Activated naive CD4-positive, alpha-beta T cell treated with anti-CD3 and anti-CD28 coated beads for 36 hours (primary cell): ENCODE measurements at regions of chr3 and their contacts with region 1.

Region 1: DNA sequence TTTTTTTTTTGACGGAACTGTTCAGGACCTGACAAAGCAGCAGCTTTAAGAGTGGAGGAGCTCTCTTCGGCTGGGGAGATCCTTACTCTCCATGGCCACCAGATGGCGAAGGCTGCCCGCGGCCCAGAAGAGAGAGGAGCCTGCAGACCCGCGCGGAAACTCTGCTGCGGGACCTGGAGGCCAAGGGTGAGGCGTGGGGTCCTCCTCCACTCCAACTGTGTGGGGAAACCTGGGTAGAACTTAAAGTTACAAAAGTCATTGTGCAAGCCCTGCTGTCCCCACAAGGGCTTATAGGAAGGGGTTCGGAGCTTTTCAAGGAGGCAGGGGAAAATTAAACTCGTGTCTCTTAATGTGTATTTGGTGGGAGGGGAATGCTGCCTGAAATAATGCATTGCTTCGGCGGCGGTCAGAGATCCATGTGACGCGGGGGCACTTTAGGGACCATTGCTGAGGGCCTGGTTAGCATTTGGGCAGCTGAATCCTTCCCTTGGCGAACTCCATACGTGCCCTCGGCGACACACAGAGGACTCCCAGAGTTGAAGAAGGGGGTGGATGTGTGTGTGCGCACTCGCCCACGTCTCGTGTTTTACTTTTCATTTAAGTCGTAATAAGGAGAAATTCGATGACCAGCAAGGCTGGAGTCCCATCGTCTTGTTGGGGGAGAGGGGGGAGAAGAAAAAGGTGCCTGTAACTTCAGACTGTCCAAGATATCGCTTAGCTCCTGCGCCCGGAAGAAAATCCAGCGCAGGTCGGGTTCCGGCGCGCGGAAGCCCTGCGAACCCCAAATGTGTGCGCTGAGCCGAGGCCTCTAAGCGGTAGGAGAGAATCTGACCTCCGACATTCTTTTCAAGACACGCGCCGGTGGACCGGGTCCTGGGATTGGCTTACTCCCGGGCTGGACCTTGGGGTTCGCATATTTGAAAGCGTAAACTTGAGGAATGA is 9.7 kb downstream of the EOMES start:
- DNase-seq: peak; percentile 81
- H3K4me3 Mint-ChIP-seq: peak overlapping the region; percentile 93
- H3K27ac Mint-ChIP-seq: no peak overlapping the region
- H3K4me1 Mint-ChIP-seq: peaks cover 19% of the 10 kb centered on the region
- H3K27me3 Mint-ChIP-seq: peaks cover 49% of the 10 kb centered on the region

Region 2: DNA sequence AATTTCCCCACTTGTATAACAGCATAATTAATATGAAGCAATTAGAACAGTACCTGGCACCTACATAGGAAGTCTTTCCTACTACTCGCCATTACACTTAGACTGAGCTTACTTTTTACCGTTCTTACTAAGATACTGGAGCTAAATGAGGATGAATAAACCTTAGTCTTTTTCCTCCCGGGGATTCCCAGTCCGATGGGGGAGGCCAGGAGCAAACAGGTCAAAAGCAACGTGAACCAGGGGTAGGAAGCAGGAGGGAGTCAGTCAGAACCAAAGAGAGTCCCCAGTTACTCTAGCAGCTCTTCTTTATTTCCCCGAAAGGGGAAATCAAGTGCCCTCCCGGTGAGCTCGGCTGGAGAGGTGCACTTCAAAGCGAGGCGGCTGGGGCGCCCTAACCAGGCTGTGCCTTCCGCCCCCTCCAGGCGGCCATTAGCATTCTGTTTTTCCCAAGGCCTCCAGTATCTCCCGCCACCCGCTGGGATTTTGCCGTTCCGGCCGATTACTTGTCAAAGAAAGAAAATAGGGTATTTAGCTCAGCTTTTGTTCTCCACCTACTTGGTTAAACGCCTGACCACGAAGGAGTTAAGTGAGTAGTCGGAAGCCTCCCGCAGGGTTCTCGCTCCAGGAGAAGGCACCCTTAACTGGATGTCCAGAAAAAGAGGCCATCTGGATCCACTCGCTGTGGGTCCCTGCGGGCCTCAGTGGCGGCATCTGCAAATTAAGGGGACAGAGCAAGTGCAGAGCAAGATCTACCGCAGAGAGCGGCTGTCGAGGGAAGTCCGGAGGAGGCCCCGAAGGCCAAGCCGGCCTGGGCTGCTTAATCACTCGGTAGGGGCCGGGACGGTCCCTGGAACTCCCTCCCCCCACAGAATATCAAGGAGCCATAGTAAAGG is 16.0 kb after region 1 on chr3:
- CTCF ChIA-PET with region 1: interaction called, 43 read pairs
- intact Hi-C with region 1: loop called (anchors 2 kb)
- DNase-seq: peak; percentile 39
- H3K4me3 Mint-ChIP-seq: peak overlapping the region; percentile 62
- H3K27ac Mint-ChIP-seq: no peak overlapping the region
- H3K4me1 Mint-ChIP-seq: peaks cover 41% of the 10 kb centered on the region
- H3K27me3 Mint-ChIP-seq: peaks cover 80% of the 10 kb centered on the region

Region 3: DNA sequence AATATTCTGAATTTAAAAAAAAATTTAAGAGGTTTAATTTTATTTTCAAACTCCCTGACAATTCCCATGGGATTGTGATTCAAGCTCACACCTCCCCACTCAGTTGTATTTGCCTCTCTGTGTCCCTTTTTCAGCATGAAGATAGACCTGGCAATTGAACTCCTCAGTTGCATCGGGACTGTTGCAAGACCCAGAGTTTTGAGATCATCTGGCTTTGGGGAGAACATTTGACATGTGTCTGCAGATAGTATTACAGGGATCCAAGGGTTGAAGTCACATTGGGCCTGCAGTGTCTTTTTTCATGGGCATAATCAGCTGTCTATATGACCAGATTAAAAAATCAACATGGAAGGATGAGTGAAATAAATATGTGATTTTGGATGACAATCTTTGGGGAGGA is 100.8 kb after region 1 on chr3:
- CTCF ChIA-PET with region 1: no interaction called
- intact Hi-C with region 1: no loop called
- DNase-seq: no peak
- H3K4me3 Mint-ChIP-seq: no peak overlapping the region
- H3K27ac Mint-ChIP-seq: no peak overlapping the region
- H3K4me1 Mint-ChIP-seq: no peaks in the 10 kb centered on the region
- H3K27me3 Mint-ChIP-seq: no peaks in the 10 kb centered on the region

Region 4: GRCh38 chr3:27976933-27977332 is 264.5 kb after region 1 on chr3:
- CTCF ChIA-PET with region 1: no interaction called
- intact Hi-C with region 1: loop called (anchors 5 kb)
- DNase-seq: no peak
- H3K4me3 Mint-ChIP-seq: no peak overlapping the region
- H3K27ac Mint-ChIP-seq: no peak overlapping the region
- H3K4me1 Mint-ChIP-seq: peaks cover 3% of the 10 kb centered on the region
- H3K27me3 Mint-ChIP-seq: no peaks in the 10 kb centered on the region

Region 5: DNA sequence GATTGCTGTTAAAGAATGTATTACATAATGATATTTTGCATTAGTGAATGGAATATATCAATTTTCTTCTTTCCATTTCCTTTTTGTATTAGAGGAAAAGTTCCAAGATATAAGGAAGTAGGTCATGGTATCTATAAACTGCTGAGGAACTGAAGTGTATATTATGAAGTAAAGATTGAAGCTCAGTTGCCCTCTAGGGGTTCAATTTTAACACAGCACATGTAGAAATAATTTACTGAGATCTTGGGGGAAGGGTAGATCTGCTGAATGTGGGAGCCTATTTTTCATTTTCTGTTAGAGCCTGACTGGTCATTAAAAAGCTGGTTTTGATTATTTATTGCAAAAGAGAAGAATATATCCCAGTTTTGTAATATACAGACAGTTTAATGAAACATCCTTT is 574.2 kb after region 1 on chr3:
- CTCF ChIA-PET with region 1: interaction called, 3 read pairs
- intact Hi-C with region 1: loop called (anchors 1 kb)
- DNase-seq: no peak
- H3K4me3 Mint-ChIP-seq: no peak overlapping the region
- H3K27ac Mint-ChIP-seq: no peak overlapping the region
- H3K4me1 Mint-ChIP-seq: peaks cover 2% of the 10 kb centered on the region
- H3K27me3 Mint-ChIP-seq: no peaks in the 10 kb centered on the region

Region 6: GRCh38 chr3:28328188-28329151 is 616.1 kb after region 1 on chr3:
- CTCF ChIA-PET with region 1: interaction called, 16 read pairs
- intact Hi-C with region 1: loop called (anchors 1 kb)
- DNase-seq: no peak
- H3K4me3 Mint-ChIP-seq: no peak overlapping the region
- H3K27ac Mint-ChIP-seq: no peak overlapping the region
- H3K4me1 Mint-ChIP-seq: peaks cover 9% of the 10 kb centered on the region
- H3K27me3 Mint-ChIP-seq: no peaks in the 10 kb centered on the region

Region 7: DNA sequence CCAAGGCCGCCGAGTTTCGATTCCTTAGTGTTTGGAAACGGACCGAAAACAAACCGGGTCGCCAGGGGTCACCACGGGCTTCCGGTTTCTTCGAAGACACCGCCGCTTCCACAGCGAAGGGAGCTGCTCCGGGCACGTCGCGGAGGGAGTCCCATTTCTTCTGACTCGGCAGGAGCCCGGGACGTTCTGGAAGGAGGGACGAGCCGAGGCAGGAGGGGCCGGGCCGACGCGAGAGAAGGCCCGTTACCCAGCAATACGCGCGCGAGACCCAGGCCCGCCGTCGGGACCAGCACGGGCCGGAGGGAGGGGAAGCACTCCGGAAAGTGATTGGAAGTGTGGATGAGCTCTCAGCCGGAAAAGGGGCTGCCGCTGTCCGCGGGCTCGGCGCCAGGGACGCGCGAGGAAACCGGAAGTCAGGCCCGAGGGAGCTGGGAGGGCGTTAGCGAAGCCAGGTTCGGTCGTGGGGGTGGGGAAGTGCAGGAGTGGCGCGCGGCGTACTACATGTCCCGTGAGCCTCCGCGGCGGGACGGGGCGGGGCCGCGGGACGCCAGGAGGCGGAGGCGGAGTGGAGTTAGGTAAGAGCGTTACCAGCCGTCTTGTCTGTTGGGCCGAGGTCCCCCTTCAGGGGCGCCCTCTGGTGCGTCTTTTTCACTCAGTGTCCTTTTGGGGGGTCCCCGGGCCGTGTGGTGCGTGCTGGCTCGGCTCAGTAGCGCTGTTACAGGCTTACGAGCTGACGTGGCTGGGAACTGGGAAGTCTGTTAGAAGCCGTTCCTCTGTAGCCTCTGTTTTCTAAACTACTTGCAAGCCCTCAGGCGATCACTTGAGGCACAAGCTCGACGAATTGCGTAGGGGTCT is 636.4 kb after region 1 on chr3 and contains the starts of genes AZI2 and ZCWPW2:
- CTCF ChIA-PET with region 1: interaction called, 3 read pairs
- intact Hi-C with region 1: loop called (anchors 5 kb)
- DNase-seq: peak; percentile 93
- H3K4me3 Mint-ChIP-seq: peak within 1 kb of the TSS; percentile 88
- H3K27ac Mint-ChIP-seq: peak within 1 kb of the TSS; percentile 92
- H3K4me1 Mint-ChIP-seq: peaks cover 36% of the 10 kb centered on the region
- H3K27me3 Mint-ChIP-seq: no peaks in the 10 kb centered on the region
- total RNA-seq, gene AZI2: 31.5 to 39.4 TPM
- total RNA-seq, gene ZCWPW2: 0.17 TPM in 1 of 2 experiments, not detected in the other

Region 8: GRCh38 chr3:29711255-29711771 is 1998.9 kb after region 1 on chr3:
- CTCF ChIA-PET with region 1: no interaction called
- intact Hi-C with region 1: no loop called
- DNase-seq: no peak
- H3K4me3 Mint-ChIP-seq: no peak overlapping the region
- H3K27ac Mint-ChIP-seq: no peak overlapping the region
- H3K4me1 Mint-ChIP-seq: no peaks in the 10 kb centered on the region
- H3K27me3 Mint-ChIP-seq: peaks cover 2% of the 10 kb centered on the region